CD14-positive monocyte (primary cell): ENCODE measurements at regions of chr21 and their contacts with region 1.

Region 1: DNA sequence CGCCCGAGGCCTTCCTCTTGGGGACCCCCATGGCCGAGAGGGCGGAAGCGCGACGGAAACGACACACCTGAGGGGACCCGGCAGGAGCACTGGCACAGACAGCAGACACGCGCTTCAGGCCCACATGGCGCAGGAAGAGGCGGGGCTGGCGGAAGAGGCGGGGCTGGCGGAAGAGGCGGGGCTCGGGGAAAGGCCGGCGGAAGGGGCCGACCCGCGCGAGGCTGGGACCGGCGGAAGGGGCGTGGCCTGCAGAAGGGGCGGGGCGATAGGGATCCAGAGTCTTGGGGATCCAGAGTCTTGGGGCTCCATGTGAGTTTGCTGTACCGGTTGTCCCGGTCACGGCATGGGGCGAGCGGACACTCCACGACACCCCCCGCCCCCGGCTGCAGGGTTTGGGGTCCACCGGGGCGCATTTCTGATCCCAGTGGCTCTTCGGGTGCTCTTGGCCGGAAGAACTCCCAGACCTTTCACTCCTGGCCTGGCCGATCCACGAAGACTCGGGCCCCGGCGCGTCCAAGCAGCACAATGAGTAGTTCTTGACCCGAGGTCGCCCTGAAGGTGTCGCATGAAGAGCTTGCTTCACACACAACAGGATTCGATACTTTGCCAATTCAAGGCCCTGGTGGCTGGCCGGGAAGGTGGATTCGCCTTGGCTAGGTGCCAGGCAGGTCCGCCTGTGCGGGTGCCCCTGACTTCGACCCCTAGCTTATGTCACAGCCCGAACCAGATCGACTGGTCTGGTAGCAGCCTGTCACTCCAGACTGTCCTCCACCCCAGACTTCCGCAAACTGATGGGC is at the start of gene URB1:
- DNase-seq: peak; percentile 85 to 87 (median 86)
- H3K4me3 ChIP-seq: peak within 1 kb of the TSS; percentile 58 to 97 (median 83)
- H3K4me3 Mint-ChIP-seq: peak within 1 kb of the TSS; percentile 90 to 91
- H3K27ac ChIP-seq: peak within 1 kb of the TSS; percentile 85 to 91
- H3K27ac Mint-ChIP-seq: peak within 1 kb of the TSS; percentile 85 to 95 (median 95)
- H3K4me1 ChIP-seq: peaks cover 17 to 21% of the 10 kb centered on the region in 2 donors
- H3K4me1 Mint-ChIP-seq: peaks cover 25% of the 10 kb centered on the region
- H3K27me3 ChIP-seq: no peaks in the 10 kb centered on the region
- H3K27me3 Mint-ChIP-seq: peaks cover 0 to 6% (median 4%) of the 10 kb centered on the region in 3 donors
- CTCF ChIP-seq: no peak
- polyA plus RNA-seq, gene URB1: 0.25 to 2.4 (median 0.47) TPM

Region 2: DNA sequence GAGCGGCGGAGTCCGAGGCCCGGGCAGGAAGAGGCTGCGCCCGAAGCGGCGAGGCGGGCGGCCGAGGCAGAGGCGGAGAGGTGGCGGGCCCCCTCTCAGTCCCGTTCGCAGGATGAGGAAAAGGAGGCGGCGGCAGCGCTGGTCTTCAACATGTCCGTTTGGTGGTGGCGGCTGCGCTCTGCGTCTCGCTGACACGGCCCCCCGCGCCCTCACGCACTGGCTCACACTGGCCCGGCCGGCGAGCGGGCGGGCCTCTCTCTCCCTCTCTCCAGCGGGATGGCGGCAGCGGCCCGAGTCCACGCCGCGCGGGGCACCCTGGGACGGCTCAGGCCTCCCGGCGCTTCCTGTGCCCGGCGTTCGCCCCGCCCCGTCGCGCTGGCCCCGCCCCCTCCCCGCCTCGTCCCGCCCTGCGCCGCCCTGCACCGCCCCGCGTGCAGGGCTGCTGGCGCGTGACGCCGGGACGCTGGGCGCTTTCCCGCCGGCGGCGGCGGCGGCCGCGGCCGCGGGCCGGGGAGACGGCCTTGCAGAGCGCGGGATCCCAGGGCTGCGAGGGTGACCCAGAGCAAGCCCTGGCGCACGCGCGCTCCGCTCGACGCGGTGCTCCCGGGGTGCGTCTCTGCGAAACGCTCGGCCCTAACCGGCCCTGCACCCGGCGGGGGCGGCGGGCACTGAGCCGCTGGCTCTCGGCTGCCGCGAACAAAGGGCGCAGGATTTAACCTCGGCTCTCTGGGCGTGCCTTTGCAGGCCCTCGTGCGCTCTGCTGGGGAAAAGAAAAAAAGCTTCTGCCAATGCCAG is 661.1 kb before region 1 on chr21 and contains the start of gene SCAF4:
- intact Hi-C with region 1: loop called in 1 of 2 experiments (anchors 10 kb)
- DNase-seq: peak; percentile 82 to 86 (median 84)
- H3K4me3 ChIP-seq: peak within 1 kb of the TSS; percentile 62 to 93 (median 91)
- H3K4me3 Mint-ChIP-seq: peak within 1 kb of the TSS; percentile 85 to 90
- H3K27ac ChIP-seq: peak within 1 kb of the TSS; percentile 80 to 89
- H3K27ac Mint-ChIP-seq: peak within 1 kb of the TSS; percentile 80 to 92 (median 91)
- H3K4me1 ChIP-seq: peaks cover 38 to 41% of the 10 kb centered on the region in 2 donors
- H3K4me1 Mint-ChIP-seq: peaks cover 10% of the 10 kb centered on the region
- H3K27me3 ChIP-seq: no peaks in the 10 kb centered on the region
- H3K27me3 Mint-ChIP-seq: peaks cover 0 to 3% (median 0%) of the 10 kb centered on the region in 3 donors
- CTCF ChIP-seq: no peak
- polyA plus RNA-seq, gene SCAF4: 4.6 to 28.7 (median 11.3) TPM

Region 3: DNA sequence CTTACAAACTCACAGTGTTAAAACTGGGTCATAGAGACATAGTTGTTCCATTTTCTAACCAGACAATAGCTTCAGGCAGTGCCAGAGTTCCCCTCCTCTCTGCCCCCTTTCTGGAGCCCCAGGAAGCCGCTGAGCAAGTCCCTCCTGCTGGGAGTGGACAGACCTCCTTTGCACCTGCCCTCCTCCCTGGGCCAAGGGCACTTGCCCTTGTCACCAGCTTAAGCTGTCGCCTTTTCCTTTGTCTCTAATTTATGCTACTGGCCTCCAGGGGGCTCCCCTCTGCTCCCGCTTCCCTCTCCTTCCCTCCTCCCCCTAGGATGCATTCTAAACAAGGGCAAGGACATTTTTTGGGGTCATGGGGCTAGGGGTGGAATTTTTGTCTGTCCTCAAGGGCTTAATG is 296.7 kb before region 1 on chr21:
- intact Hi-C with region 1: no loop called
- DNase-seq: no peak
- H3K4me3 ChIP-seq: no peak overlapping the region
- H3K4me3 Mint-ChIP-seq: no peak overlapping the region
- H3K27ac ChIP-seq: no peak overlapping the region
- H3K27ac Mint-ChIP-seq: no peak overlapping the region
- H3K4me1 ChIP-seq: no peaks in the 10 kb centered on the region
- H3K4me1 Mint-ChIP-seq: no peaks in the 10 kb centered on the region
- H3K27me3 ChIP-seq: no peaks in the 10 kb centered on the region
- H3K27me3 Mint-ChIP-seq: peaks cover 2 to 7% (median 7%) of the 10 kb centered on the region in 3 donors
- CTCF ChIP-seq: no peak

Region 4: DNA sequence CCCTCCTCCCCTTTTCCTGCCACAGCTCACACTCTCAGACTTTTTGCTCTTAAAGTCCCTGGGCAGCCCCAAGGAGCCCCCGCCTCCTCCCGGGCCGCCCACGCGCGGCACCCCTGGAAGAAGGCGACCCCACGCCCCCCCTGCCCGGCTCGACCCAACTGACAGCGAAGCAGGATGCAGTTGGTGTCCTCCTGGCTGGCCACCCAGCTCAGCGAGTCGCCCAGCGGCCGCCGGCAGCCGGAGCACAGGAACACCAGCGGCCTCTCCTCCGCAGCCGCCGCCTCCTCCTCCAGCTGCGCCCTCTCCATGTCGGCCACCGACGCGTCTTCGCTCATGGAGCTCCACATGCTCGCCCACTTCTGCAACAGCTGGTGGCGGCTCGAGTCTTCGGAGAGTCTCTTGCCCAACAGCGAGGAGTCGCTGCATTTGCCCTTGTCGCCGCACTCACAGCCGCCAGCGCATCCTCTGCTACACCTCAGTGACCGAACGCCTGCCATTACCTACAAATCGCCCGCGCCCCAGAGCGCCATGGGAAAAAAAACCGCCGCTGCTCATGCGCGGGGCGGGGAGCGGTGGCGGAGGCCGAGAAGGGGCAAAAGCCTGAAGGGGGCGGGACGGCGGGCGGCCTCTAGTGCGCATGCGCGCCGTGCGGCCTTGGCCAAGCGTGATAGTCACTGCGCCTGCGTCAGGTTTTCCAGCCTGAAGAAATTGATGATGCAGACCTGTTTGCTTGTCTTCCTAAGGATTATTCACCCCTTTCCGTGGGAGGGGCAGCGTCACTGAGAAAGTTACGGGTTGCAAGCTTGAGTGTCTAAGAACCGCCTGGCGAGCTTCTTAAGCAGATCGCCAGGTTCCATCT is 114.3 kb before region 1 on chr21 and contains the start of gene MIS18A:
- intact Hi-C with region 1: loop called (anchors 5 to 10 kb)
- DNase-seq: peak; percentile 94 to 99 (median 98)
- H3K4me3 ChIP-seq: peak within 1 kb of the TSS; percentile 74 to 94 (median 82)
- H3K4me3 Mint-ChIP-seq: peak within 1 kb of the TSS; percentile 98 to 99
- H3K27ac ChIP-seq: peak within 1 kb of the TSS; percentile 29 to 85
- H3K27ac Mint-ChIP-seq: peak within 1 kb of the TSS; percentile 85 to 95 (median 94)
- H3K4me1 ChIP-seq: peaks cover 16 to 21% of the 10 kb centered on the region in 2 donors
- H3K4me1 Mint-ChIP-seq: peaks cover 23% of the 10 kb centered on the region
- H3K27me3 ChIP-seq: no peaks in the 10 kb centered on the region
- H3K27me3 Mint-ChIP-seq: peaks cover 0 to 1% (median 0%) of the 10 kb centered on the region in 3 donors
- CTCF ChIP-seq: no peak
- polyA plus RNA-seq, gene MIS18A: 1.6 to 2.5 (median 2.3) TPM

Region 5: DNA sequence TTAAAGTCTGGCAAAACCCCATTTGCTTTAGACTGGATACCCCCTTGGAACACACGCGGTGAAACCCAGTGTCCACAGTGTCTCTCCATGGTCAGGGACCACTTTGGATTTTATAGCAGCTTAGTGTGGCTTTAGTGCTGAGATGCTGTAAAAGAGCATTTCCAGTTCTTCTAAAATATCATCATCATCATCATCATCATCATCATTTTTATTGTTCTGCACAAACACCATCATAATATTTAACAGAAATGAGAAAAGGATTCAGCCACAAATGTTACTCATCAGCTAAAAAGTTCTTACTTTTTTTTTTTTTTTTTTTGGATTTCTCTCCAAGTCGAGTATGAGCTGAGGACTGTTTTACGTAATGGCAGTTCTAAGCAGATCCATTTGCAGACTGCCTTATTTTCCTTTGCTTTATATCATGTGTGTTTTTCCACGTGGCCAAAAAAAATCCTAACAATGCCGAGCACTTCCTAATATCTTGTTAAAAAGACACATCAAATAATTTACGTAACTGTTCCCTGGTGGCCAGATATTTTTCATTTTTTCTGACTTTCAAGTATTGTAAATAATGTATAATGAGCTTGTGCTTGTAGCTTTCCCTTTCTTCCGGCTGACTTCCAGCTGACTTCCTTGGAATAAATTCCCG is 82.2 kb after region 1 on chr21:
- intact Hi-C with region 1: no loop called
- DNase-seq: no peak
- H3K4me3 ChIP-seq: no peak overlapping the region
- H3K4me3 Mint-ChIP-seq: no peak overlapping the region
- H3K27ac ChIP-seq: no peak overlapping the region
- H3K27ac Mint-ChIP-seq: no peak overlapping the region
- H3K4me1 ChIP-seq: no peaks in the 10 kb centered on the region
- H3K4me1 Mint-ChIP-seq: no peaks in the 10 kb centered on the region
- H3K27me3 ChIP-seq: no peaks in the 10 kb centered on the region
- H3K27me3 Mint-ChIP-seq: peaks cover 0 to 1% (median 0%) of the 10 kb centered on the region in 3 donors
- CTCF ChIP-seq: no peak